Motor neuron (in vitro differentiated cells): ENCODE measurements at regions of chr15 and their contacts with region 1.

Region 1: GRCh38 chr15:69058830-69059556 is 44.5 kb downstream of the NOX5 start:
- ATAC-seq: peak; percentile 93 to 99 (median 96)
- H3K4me3 ChIP-seq: no peak overlapping the region
- H3K27ac ChIP-seq: no peak overlapping the region
- H3K4me1 ChIP-seq: peaks cover 3% of the 10 kb centered on the region in 2 donors

Region 2: DNA sequence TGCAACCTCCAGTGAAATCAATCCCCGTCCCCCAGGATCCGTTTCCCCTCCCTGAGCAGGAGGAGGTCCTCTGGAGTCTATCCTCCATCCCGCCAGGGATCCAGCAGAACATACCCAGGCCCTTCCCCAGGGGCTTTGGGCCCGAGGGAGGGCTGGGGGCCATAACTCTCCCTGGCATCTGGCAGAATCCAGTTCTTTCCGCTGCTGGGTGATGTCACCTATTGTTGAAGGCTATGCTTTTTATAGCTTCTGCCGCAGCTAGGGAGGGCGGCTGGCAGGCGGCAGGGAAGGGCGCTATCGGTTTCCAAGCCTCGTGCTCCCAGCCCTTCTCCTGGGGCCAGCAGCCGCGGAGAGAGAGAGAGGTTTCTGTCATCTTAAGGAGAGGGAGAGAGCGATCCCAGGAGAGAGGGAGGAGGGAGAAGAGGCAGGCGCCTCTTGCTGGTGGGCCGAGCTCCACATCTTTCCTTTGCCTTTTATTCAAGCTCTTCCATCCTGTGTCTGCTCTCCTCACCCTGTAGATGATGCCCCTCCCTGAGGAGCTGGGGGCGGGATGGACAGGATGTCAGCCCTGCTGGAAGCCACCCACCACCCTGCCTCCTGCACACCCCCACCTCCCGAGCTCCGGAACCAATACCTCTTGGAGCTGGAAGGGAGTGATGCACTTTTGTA is 358.4 kb before region 1 on chr15:
- in situ Hi-C with region 1: no loop called
- ATAC-seq: peak; percentile 79 to 94 (median 91)
- H3K4me3 ChIP-seq: peak overlapping the region in 3 of 5 donors; percentile 4 to 12 (median 4)
- H3K27ac ChIP-seq: peak overlapping the region; percentile 91 to 93
- H3K4me1 ChIP-seq: peaks cover 25 to 32% of the 10 kb centered on the region in 2 donors

Region 3: DNA sequence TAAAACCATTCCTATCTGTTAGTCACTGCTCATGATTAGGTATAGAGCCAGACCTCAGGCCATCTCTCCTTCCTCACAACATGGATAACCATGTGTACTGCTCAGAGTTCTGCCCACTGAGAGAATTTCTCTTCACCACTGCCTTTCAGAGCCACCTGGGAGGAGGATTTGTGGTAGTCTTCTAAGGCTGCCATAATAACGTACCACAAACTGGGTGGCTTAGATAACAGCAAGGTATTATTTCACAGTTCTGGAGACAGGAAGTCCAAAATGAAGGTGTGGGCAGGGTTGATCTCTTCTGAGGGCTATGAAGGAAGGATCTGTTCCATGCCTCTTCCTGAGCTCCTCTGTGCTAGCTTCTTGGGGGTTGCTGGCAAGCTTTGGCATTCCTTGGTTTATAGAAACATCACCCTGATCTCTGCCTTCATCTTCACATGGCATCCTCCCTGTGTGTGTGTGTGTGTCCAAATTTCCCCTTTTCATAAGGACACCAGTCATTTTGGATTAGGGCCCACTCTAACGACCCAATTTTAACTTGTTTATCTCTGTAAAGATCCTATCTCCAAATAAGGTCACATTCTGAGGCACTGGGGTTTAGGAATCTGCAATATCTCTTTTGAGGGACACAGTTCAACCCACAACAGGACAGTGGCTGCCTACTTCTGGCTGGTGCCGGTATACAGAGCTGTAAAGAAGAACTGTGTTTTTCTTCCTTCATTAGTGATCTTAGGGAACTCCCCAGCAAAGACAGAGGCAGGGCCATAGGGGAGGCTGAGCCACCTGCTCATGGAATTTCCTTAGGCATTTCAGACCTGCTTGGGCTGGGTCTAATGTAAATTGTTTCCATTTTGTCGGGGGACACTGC is 86.6 kb before region 1 on chr15:
- in situ Hi-C with region 1: no loop called
- ATAC-seq: no peak
- H3K4me3 ChIP-seq: no peak overlapping the region
- H3K27ac ChIP-seq: no peak overlapping the region
- H3K4me1 ChIP-seq: no peaks in the 10 kb centered on the region

Region 4: GRCh38 chr15:69209661-69210060 is 150.7 kb after region 1 on chr15:
- in situ Hi-C with region 1: no loop called
- ATAC-seq: no peak
- H3K4me3 ChIP-seq: no peak overlapping the region
- H3K27ac ChIP-seq: no peak overlapping the region
- H3K4me1 ChIP-seq: no peaks in the 10 kb centered on the region

Region 5: DNA sequence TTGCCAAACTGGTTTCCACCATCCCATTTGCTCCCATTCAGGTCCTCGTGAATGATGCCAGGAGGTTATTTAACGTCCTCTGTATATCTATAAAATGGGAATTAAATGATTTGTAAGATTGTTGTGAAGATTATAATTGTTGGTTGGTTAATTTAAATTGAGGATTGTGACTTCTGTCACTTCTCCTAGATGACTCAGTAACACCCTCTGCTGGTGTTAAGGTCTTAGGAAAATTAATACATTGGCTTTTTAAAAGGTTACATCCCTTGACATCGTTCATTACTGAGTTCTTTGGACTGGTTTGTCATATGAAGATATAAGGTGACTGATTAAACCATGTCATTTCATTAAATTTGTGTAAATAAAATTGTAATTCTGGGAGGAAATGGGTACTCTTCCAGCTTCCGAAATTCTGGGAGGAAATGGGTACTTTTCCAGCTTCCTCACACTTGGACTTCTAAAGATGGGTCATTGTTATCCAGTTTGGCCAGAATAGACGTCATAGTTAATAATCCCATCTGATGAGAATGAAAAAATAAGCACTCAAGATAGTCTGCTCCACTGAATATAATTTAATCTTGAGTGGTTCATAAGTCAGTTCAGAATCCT is 206.5 kb after region 1 on chr15:
- in situ Hi-C with region 1: loop called in 4 of 9 experiments (anchors 25 kb)
- ATAC-seq: peak in 1 of 8 experiments; percentile 14
- H3K4me3 ChIP-seq: no peak overlapping the region
- H3K27ac ChIP-seq: no peak overlapping the region
- H3K4me1 ChIP-seq: no peaks in the 10 kb centered on the region

Region 6: GRCh38 chr15:69394556-69395282 is 335.7 kb after region 1 on chr15:
- in situ Hi-C with region 1: loop called in 3 of 9 experiments (anchors 10 to 25 kb)
- ATAC-seq: peak; percentile 47 to 95 (median 92)
- H3K4me3 ChIP-seq: no peak overlapping the region
- H3K27ac ChIP-seq: no peak overlapping the region
- H3K4me1 ChIP-seq: peaks cover 16 to 17% of the 10 kb centered on the region in 2 donors

Region 7: GRCh38 chr15:69403594-69403993 is 344.6 kb after region 1 on chr15:
- in situ Hi-C with region 1: loop called in 8 of 9 experiments (anchors 10 to 25 kb)
- ATAC-seq: peak in 7 of 8 experiments; percentile 35 to 97 (median 60)
- H3K4me3 ChIP-seq: no peak overlapping the region
- H3K27ac ChIP-seq: no peak overlapping the region
- H3K4me1 ChIP-seq: peaks cover 0 to 3% of the 10 kb centered on the region in 2 donors

Region 8: GRCh38 chr15:69413822-69414700 is 355.1 kb after region 1 on chr15 and contains the start of gene KIF23:
- in situ Hi-C with region 1: loop called in 5 of 9 experiments (anchors 10 to 25 kb)
- ATAC-seq: peak; percentile 91 to 97 (median 94)
- H3K4me3 ChIP-seq: peak within 1 kb of the TSS; percentile 53 to 83 (median 69)
- H3K27ac ChIP-seq: peak within 1 kb of the TSS in 1 of 2 donors; percentile 58
- H3K4me1 ChIP-seq: peaks cover 0 to 5% of the 10 kb centered on the region in 2 donors
- total RNA-seq, gene KIF23: 1.9 to 39.0 (median 2.8) TPM

Region 9: DNA sequence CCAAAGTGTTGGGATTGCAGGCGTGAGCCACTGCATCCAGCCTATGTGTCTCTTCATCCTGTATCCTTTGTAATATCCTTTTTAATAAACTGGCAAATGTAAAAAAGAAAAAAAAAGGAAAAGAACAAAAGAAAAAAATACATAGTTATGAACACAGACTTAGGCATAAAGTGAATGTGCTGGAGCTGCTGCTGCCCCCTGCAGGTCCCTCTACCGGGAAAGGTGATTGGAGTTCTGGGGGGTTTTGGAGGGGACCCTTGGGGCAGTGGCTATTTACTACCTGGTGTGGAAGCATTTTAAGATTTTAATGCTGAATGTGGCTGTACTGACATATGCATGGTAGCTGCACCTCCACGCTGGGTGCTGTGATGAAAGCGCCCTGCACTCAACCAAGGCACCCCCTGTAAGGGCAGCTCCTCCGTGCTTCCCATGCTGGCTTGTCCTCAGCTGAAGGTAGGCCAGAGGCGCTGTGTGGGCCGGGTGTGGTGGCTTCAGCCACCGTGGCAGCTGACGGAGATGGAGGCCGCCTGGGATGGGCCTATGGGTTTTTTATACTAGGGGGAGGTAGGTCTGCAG is 443.6 kb after region 1 on chr15:
- in situ Hi-C with region 1: no loop called
- ATAC-seq: no peak
- H3K4me3 ChIP-seq: no peak overlapping the region
- H3K27ac ChIP-seq: no peak overlapping the region
- H3K4me1 ChIP-seq: peaks cover 31 to 47% of the 10 kb centered on the region in 2 donors